ENCODE measurements at regions of chr18 and their contacts with region 1.

Region 1: DNA sequence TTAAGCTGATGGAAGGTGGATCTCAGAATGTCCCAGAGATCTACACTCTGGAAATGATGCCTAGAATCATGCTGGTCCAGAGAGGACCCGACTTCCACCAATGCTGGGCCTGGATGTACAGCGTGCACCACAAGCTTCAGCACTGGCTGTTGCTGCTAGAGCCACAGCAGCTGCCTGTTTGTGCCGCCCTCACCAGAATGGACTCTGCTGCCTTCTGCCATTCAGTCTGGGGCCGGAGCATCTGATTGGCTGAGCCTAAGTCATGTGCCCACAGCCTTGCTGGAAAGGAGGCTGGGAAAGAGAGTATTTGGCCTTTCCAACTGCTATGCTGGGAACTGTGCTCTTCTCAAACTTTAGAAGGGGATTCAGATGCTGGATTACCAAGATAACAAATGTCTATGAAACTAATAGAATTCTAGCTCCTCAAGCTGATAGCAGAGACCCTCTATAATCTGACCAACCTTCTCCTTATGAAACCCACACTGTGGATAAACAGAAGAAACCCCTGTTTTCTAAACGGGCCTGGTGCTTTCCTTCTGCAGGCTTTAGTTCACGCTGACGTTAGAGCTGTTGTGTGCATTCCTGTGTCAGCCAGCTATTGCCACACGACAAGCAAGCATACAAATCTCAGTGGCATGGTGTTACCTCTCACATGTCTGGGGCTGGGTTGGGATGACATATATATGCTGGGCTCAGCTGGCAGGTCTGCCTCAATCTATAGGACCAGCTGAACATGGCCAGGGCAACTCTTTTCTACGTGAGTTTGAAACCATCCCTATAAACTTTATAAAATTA is 4.1 kb upstream of the LOXHD1 start:
- DNase-seq: no peak
- ATAC-seq: no peak
- H3K4me3 ChIP-seq: no peak overlapping the region
- H3K27ac ChIP-seq: no peak overlapping the region
- H3K4me1 ChIP-seq: no peaks in the 10 kb centered on the region
- H3K27me3 ChIP-seq: no peaks in the 10 kb centered on the region
- CTCF ChIP-seq: no peak

Region 2: DNA sequence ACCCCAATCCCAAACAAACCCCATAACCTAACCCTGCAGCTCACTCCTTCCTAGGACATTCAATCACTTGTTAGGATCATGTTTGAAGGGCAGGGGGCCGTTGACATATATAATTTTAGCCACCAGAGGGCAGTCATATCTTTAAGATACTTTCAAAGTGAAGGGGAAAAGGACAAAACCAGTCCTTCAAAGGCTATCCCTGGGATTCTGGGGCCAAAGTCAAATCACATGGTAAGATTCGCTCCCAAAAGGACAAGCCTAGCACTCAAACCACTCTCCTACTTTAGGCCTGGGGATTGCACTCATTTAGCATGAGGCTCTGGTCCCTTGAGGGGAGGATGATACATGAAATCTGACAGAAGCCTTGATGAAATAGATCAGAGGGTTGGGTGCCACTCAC is 512.3 kb before region 1 on chr18:
- CTCF ChIA-PET with region 1: no interaction called
- POLR2A ChIA-PET with region 1: no interaction called
- in situ Hi-C with region 1: no loop called
- intact Hi-C with region 1: loop called (anchors 10 kb)
- DNase-seq: peak; percentile 55
- ATAC-seq: peak; percentile 59
- H3K4me3 ChIP-seq: no peak overlapping the region
- H3K27ac ChIP-seq: no peak overlapping the region
- H3K4me1 ChIP-seq: peaks cover 11% of the 10 kb centered on the region
- H3K27me3 ChIP-seq: no peaks in the 10 kb centered on the region
- CTCF ChIP-seq: peak; percentile 63

Region 3: DNA sequence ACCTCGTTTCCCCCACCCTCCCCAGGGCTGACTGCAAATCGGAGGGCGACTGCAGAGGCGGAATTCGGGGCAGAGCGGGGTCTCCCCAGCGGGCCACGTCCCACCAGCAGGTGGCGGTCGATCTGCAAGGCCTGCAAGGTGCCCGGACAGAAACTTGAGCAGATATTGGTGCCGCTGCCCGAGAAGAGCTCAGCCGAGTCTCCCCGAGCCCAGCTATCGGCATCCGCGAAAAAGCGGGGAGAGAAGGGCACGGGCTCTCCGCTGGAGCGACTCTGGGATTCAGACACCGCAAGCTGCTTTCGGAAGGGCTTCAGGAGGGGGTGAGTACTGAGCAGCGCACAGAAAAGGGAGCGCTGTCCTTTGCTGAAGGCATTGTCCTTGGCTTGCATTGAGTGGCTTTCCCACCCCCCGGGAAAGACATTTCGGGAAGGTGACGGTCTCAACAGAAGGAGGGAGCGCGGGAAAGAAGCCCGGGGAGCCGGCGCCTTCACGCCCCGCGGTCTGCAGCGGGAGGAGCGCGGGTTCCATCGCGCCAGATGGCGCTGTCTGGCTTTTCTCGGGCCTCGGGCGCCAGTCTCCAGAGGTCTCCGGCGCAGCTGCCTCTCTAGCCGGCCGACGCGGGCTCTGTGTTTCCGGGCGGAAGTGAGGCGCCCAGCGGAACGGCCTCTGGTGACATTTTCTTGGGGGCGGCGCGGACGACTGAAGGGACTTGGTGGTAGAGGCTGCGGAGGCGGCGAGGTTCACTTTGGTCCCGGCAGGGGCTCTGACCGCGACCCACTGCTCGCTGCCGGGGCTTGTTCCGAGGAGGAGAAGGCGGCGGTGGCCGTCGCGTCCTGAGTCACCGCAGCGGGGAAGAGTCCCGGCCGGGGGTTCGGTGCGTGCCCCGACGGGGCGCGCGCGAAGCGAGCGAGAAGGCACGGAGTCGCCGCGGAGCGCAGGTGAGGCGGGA is 487.5 kb before region 1 on chr18:
- CTCF ChIA-PET with region 1: interaction called, 11 read pairs
- POLR2A ChIA-PET with region 1: no interaction called
- in situ Hi-C with region 1: no loop called
- intact Hi-C with region 1: no loop called
- DNase-seq: peak; percentile 69
- ATAC-seq: peak; percentile 97
- H3K4me3 ChIP-seq: peak overlapping the region; percentile 79 to 86
- H3K27ac ChIP-seq: peak overlapping the region; percentile 74
- H3K4me1 ChIP-seq: peaks cover 8% of the 10 kb centered on the region; the same call in 1 of the 2 replicates
- H3K27me3 ChIP-seq: no peaks in the 10 kb centered on the region
- CTCF ChIP-seq: peak; percentile 87

Region 4: DNA sequence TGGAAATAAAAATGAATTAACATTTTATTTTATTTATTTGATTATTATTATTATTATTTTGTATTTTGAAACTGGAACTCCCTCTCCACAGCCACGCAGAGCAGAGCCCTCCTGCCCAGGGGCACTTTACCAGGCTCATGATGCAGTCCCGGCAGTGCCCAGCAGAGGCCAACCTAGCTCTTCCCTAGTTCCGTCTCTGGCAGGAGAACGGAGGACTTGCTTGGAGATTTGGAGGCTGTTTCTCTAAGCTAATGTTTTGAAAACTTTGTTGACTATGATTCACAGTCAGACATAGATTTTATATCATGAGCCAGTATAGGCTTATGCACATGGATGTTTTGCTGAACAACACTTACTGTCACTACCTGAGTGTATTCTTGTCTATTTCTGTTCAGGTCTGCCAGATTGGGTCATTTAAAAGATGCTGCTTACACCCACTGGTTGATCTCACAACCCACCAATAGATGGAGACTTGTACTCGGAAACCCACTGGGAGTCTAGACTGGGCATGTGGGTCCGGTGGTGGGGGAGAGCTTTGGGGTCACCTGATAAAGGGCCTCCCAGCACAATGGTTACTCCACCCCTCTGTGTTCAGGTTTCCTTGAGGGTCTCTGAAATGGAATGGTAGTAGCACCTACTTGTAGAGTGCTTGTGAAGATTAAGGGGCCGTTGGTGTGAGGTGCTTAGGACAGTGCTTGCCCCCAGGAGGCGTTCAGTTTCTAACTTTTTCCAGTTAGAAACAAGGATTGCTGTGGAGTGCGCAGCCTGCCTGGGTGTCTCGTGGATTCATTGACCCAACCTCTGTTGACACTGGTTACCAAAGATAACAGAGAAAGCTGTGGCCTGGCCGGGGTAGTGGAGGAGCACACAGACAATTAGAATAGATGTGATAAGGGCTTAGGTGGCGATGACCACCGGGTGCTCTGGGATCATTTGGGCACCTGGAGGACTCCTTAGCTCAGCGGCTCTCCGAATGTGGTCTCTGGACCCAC is 379.7 kb before region 1 on chr18:
- CTCF ChIA-PET with region 1: interaction called, 14 read pairs
- POLR2A ChIA-PET with region 1: no interaction called
- in situ Hi-C with region 1: no loop called
- intact Hi-C with region 1: loop called (anchors 2 kb)
- DNase-seq: peak; percentile 55
- ATAC-seq: peak; percentile 93
- H3K4me3 ChIP-seq: no peak overlapping the region
- H3K27ac ChIP-seq: no peak overlapping the region
- H3K4me1 ChIP-seq: no peaks in the 10 kb centered on the region
- H3K27me3 ChIP-seq: no peaks in the 10 kb centered on the region
- CTCF ChIP-seq: peak; percentile 84

Region 5: DNA sequence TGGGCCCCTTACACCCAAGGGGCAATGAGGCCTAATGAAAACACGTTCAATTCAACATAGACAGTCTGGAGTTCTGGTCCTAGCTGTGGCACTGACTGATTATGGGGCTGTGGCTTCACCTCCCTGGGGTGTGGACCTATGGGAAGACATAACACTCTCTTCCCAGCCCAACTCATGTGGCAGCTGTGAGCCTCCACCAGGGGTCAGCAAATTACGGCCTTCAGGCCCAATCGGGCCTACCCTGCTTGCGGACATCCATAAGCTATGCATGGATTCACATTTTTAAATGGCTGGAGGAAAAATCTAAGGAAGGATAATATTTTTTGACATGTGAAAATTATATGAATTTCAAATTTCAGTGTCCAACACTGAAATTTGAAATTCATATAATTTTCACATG is 105.4 kb before region 1 on chr18:
- CTCF ChIA-PET with region 1: interaction called, 9 read pairs
- POLR2A ChIA-PET with region 1: no interaction called
- in situ Hi-C with region 1: no loop called
- intact Hi-C with region 1: loop called (anchors 5 kb)
- DNase-seq: no peak
- ATAC-seq: peak; percentile 93
- H3K4me3 ChIP-seq: no peak overlapping the region
- H3K27ac ChIP-seq: no peak overlapping the region
- H3K4me1 ChIP-seq: no peaks in the 10 kb centered on the region
- H3K27me3 ChIP-seq: no peaks in the 10 kb centered on the region
- CTCF ChIP-seq: peak; percentile 70

Region 6: DNA sequence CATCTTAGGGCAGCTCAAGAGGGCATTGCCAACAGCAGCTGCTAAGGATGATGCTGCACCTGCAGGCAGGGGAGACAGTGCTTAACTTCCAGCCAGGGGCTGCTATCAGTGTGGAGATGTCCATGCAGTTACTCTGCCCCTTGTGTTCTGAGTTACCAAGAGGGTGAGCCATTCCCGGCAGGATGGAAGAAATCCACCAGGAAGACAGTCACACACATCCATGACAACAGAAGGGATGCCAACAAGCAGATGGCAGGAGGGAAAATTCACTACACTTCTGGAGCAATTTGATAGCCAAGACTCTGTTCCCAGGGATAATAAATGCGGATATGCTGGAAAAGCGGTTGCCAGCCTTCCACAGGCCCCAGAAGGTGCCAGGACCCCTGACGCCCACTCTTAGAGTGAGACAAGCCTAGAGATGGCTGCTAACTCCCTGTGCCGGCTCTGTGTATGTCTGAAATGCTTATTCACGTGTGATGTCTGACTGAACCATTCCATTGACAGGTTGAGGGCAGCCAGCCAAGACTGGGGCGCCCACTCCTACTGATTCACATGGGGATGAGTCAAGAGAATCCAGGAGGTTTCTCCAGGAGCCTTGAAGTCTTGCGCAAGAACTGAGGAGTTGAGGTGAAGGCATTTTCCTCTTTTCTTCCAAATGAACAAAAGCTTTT is 28.6 kb before region 1 on chr18:
- CTCF ChIA-PET with region 1: no interaction called
- POLR2A ChIA-PET with region 1: no interaction called
- in situ Hi-C with region 1: no loop called
- intact Hi-C with region 1: no loop called
- DNase-seq: peak; percentile 2
- ATAC-seq: no peak
- H3K4me3 ChIP-seq: no peak overlapping the region
- H3K27ac ChIP-seq: no peak overlapping the region
- H3K4me1 ChIP-seq: no peaks in the 10 kb centered on the region
- H3K27me3 ChIP-seq: no peaks in the 10 kb centered on the region
- CTCF ChIP-seq: no peak

Measured in Panc1 (cell line).